ENCODE measurements at regions of chr15 and their contacts with region 1.

Region 1: GRCh38 chr15:78315686-78316282 is 16.4 kb upstream of the SKIC8 start:
- DNase-seq: peak; percentile 54
- H3K4me3 ChIP-seq: no peak overlapping the region
- H3K27ac ChIP-seq: peak overlapping the region; percentile 76 to 86 (median 77)
- H3K4me1 ChIP-seq: peaks cover 3 to 19% (median 10%) of the 10 kb centered on the region in 4 donors
- H3K27me3 ChIP-seq: no peaks in the 10 kb centered on the region
- CTCF ChIP-seq: peak in 4 of 5 experiments; percentile 19 to 55 (median 36)
- EP300 ChIP-seq: no peak
- POLR2A ChIP-seq: no peak

Region 2: DNA sequence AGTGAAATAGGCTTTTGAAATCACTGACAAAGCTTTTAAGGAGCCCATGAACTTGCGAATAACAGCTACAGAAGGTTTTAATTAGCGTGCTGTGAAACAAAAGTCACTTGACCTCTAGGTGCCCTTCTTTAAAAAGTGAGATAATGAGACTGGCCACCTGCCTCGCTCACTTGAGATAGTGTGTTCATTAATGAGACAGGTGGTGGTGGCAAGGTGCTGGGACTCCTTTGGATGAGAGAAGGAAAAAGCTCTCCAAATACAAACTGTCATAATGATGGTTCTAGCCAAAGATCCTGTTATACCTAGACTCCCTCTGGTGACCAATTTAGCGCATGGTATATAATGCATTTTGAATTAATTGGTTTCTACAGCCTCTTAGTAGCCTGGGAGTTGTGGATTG is 99.5 kb after region 1 on chr15:
- in situ Hi-C with region 1: loop called (anchors 10 kb)
- intact Hi-C with region 1: no loop called
- DNase-seq: no peak
- H3K4me3 ChIP-seq: no peak overlapping the region
- H3K27ac ChIP-seq: peak overlapping the region; percentile 35 to 68 (median 61)
- H3K4me1 ChIP-seq: peaks cover 0 to 50% (median 16%) of the 10 kb centered on the region in 4 donors
- H3K27me3 ChIP-seq: no peaks in the 10 kb centered on the region
- CTCF ChIP-seq: peak in 4 of 5 experiments; percentile 29 to 61 (median 42)
- EP300 ChIP-seq: no peak
- POLR2A ChIP-seq: no peak

Region 3: GRCh38 chr15:78422571-78423340 is 107.0 kb after region 1 on chr15:
- in situ Hi-C with region 1: loop called (anchors 10 kb)
- intact Hi-C with region 1: no loop called
- DNase-seq: peak; percentile 78
- H3K4me3 ChIP-seq: no peak overlapping the region
- H3K27ac ChIP-seq: peak overlapping the region; percentile 43 to 75 (median 56)
- H3K4me1 ChIP-seq: peaks cover 5 to 36% (median 17%) of the 10 kb centered on the region in 4 donors
- H3K27me3 ChIP-seq: no peaks in the 10 kb centered on the region
- CTCF ChIP-seq: peak; percentile 89 to 98 (median 94)
- EP300 ChIP-seq: no peak
- POLR2A ChIP-seq: no peak